Brain microvascular endothelial cell (primary cell): ENCODE measurements at regions of chr18 and their contacts with region 1.

Region 1: DNA sequence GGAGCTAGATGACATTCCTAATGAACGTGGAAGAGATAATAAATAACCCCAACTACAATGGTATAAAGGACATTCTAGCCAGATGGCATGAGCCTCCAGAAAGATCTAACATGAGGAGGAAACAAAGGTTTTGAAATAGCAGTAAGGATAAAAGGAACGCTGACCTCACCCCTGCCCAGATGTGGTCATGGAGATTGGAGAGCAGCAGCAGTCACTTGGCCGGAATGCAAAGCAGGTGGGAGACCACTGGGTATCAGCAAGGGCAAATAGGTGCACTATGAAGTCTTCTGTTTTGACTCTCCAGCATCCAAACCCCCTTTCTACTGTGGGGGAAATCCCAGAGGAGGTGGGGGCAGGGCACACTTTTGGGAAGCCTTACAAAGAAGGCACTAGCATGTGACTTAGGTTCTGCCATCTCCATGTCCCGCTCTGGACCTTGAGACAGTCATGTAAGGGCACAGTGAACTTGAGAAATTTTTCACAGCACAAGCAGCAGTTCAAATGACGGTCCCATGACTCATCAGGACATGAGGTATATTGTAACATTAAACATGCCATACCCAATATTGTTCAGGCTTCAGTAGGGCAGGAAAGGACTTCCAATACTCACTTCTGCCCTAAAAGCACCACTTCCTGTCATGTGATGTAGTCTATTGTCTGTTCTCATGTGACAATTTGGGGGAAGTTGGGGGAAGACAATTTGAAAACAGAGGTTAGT is 55.2 kb downstream of the METTL4 start:
- DNase-seq: peak; percentile 89
- H3K4me3 ChIP-seq: no peak overlapping the region
- H3K27ac ChIP-seq: peak overlapping the region; percentile 92
- H3K27me3 ChIP-seq: no peaks in the 10 kb centered on the region
- CTCF ChIP-seq: no peak

Region 2: DNA sequence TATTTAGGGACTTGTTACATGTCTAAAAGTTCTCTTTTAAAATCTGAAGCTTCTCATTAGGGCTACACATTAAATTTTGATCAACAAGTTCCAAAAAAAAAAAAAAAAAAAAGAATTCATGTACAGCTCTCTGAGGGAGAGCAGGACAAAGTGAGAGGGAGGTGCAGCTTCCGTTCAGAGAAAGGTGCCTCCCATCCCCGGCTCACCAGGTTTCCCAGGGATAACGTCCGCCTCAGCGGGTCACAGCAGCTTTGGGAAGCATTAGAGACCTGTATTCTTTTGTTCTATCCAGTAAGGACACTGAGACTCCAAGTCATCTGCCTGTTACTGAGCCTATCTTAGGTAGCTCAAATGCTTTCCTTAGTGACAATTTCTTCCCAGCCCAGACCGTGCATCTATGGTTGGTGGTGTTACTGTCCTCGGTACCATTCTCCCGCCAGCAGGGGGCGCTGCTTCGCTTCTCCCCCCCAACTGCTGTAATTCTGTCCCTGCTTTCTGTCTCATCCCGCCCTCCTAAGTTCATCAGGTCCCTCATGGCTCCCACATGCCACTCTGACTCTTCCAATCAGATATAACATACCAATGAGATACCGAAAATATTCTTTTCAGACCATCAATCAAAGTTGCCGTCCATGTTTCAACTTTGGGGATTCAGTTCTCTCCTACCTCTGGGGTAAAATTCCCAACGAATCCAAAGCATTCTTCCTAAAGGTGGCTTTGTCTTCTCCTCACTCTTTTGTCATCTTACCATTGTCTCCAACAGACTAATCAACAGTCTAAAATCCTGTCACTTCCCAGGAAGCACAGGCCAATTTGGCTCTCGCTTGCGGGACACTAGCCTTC is 411.2 kb before region 1 on chr18:
- in situ Hi-C with region 1: loop called (anchors 25 kb)
- DNase-seq: peak; percentile 38
- H3K4me3 ChIP-seq: no peak overlapping the region
- H3K27ac ChIP-seq: no peak overlapping the region
- H3K27me3 ChIP-seq: no peaks in the 10 kb centered on the region
- CTCF ChIP-seq: peak; percentile 85

Region 3: DNA sequence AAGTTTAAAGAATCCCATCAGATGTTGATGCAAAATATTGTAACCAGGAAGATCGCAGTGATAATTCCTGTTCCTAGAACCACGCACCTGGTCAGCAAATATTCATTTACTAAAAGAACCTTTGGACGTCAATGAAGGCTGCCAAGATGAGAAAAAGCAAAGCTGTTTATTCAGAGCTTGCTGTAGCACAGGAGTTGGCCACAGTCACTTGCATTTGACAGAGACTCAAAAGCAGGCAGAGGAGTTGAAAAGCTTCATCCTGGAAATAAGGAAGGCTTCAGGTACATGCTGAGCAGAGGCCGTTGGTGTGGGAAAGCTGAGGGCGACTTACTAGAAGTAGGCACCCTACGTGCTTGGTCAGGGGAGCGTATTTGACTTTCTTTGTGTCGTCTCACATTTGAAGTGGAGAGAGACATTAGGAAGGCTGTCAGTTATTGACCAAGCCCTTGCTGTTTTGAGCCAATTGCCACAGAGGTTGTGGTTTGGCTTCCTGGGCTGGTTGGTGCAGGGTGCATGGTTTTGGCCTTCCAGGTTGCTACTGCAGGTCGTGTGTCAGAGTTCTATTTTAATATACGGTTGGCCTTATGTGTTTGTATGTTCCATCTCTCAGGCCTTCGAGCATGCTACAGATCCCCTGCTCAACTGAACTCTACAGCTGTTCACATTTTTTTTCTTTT is 234.4 kb before region 1 on chr18:
- in situ Hi-C with region 1: no loop called
- DNase-seq: no peak
- H3K4me3 ChIP-seq: no peak overlapping the region
- H3K27ac ChIP-seq: no peak overlapping the region
- H3K27me3 ChIP-seq: no peaks in the 10 kb centered on the region
- CTCF ChIP-seq: no peak

Region 4: DNA sequence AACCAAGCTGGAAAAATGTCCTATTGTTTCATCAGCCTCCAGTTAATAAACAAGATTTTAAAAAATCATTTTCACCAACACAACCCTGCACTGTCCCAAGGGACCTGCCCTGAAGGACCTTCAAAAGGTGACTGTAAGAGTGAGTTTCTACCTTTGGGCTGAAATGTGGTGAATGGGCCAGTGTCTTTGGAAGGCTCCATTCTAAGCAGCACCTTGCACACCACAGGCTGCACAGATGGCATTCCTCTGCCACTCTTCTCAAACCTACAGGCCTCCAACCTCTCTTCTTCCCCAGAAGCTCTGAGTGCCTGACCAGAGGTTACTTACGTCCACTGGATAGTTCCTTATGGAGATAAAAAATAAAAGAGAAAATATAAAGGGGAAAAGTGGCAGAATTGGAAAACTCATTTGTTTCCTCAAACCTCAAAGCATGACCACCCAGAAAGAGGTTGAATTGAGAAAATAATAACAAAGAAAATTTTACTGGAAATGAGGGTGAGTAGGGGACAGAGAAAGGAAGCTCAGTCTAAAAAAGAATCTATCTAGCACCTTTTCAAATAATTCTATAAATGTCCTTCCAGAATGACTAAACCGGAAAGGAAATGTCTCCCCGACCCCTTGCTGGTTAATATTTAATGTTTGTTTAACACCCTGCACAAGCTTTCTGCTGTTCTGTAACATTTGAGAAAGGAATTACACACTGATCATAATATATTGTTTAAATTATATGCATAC is 120.5 kb before region 1 on chr18:
- in situ Hi-C with region 1: loop called (anchors 25 kb)
- DNase-seq: no peak
- H3K4me3 ChIP-seq: no peak overlapping the region
- H3K27ac ChIP-seq: no peak overlapping the region
- H3K27me3 ChIP-seq: no peaks in the 10 kb centered on the region
- CTCF ChIP-seq: no peak